PC-9 (cell line): ENCODE measurements at regions of chr22 and their contacts with region 1.

Region 1: DNA sequence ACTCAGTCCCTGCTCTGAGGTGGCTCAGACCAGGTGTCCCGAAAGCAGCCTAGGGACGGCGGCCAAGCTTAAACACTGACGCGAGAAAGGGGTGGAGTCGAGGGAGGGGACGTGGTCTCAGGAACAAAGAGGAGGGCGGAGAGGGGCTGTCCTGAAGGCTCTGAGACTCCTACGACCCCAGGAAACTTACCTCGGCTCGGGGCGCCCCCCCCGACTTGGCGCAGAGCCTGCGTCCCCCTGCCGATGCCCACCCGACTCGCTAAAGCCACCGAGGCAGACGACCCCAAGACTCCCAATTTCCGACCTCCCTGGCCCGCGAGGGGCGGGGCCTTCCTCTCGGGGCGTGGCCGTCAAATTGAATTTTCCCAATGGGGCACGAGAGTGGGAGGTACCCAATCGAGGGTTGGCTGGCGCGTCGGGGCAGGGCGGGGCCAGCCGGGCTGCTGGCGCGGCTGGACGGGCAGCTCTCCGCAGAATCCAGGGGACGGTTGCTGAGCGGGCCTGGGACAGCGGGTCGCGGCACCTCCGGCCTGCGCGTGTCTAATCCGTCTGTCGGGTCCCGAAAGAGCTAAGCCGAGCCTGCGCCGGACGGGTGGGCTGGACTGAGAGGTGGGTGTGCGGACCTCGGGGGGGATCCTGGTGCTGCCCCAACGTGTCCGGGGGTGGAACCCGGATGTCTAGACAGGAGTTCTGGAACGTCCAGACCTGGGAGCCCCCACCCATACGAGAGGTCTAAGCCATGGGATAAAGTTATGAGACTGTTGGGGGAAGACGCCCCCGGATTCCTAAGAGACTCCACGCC is at the start of gene SMTN:
- DNase-seq: peak; percentile 80 to 95
- H3K4me3 ChIP-seq: peak within 1 kb of the TSS; percentile 59
- H3K27ac ChIP-seq: no peak within 1 kb of the TSS
- H3K4me1 ChIP-seq: peaks cover 20% of the 10 kb centered on the region
- H3K27me3 ChIP-seq: no peaks in the 10 kb centered on the region
- CTCF ChIP-seq: no peak
- total RNA-seq, gene SMTN: 68.8 and 76.3 TPM in 2 replicates

Region 2: DNA sequence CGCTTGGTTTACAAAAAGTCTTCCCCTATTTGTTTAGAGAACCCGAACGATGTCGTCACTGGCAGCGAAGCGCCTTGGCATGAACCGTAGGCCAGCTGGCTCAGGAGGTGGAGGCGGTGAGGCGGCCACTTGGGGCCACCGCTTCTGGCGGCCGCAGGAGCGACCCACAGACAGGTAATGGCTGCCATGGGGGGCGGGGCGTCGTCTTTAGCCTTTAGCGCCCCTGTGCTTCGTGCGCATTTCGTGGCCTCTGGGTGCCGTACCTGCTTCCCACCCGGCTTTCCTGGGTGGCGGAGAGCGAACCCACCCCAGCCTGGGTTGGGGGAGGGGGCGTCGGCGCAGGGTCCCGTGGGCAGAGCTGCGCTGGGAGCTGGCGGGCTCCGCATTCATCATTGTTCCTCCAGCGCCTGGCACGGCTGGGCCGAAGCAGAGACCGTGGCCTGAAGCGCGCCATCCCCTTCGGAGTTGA is 386.8 kb before region 1 on chr22:
- CTCF ChIA-PET with region 1: no interaction called
- POLR2A ChIA-PET with region 1: interaction called, 11 read pairs
- intact Hi-C with region 1: no loop called
- DNase-seq: peak; percentile 59 to 70
- H3K4me3 ChIP-seq: peak overlapping the region; percentile 64
- H3K27ac ChIP-seq: no peak overlapping the region
- H3K4me1 ChIP-seq: peaks cover 9% of the 10 kb centered on the region; the same call in 1 of the 2 replicates
- H3K27me3 ChIP-seq: no peaks in the 10 kb centered on the region
- CTCF ChIP-seq: no peak

Region 3: GRCh38 chr22:30931541-30932300 is 149.3 kb before region 1 on chr22:
- CTCF ChIA-PET with region 1: interaction called, 10 read pairs
- POLR2A ChIA-PET with region 1: no interaction called
- intact Hi-C with region 1: no loop called
- DNase-seq: no peak
- H3K4me3 ChIP-seq: no peak overlapping the region
- H3K27ac ChIP-seq: no peak overlapping the region
- H3K4me1 ChIP-seq: no peaks in the 10 kb centered on the region
- H3K27me3 ChIP-seq: no peaks in the 10 kb centered on the region
- CTCF ChIP-seq: no peak

Region 4: GRCh38 chr22:30968924-30969539 is 112.0 kb before region 1 on chr22 and contains the start of gene TUG1:
- CTCF ChIA-PET with region 1: no interaction called
- POLR2A ChIA-PET with region 1: interaction called, 7 read pairs
- intact Hi-C with region 1: loop called (anchors 1 kb)
- DNase-seq: peak; percentile 95 to 97
- H3K4me3 ChIP-seq: peak within 1 kb of the TSS; percentile 89
- H3K27ac ChIP-seq: peak within 1 kb of the TSS; percentile 78
- H3K4me1 ChIP-seq: peaks cover 32% of the 10 kb centered on the region; the same call in 1 of the 2 replicates
- H3K27me3 ChIP-seq: no peaks in the 10 kb centered on the region
- CTCF ChIP-seq: no peak
- total RNA-seq, gene TUG1: 80.6 and 105 TPM in 2 replicates

Region 5: DNA sequence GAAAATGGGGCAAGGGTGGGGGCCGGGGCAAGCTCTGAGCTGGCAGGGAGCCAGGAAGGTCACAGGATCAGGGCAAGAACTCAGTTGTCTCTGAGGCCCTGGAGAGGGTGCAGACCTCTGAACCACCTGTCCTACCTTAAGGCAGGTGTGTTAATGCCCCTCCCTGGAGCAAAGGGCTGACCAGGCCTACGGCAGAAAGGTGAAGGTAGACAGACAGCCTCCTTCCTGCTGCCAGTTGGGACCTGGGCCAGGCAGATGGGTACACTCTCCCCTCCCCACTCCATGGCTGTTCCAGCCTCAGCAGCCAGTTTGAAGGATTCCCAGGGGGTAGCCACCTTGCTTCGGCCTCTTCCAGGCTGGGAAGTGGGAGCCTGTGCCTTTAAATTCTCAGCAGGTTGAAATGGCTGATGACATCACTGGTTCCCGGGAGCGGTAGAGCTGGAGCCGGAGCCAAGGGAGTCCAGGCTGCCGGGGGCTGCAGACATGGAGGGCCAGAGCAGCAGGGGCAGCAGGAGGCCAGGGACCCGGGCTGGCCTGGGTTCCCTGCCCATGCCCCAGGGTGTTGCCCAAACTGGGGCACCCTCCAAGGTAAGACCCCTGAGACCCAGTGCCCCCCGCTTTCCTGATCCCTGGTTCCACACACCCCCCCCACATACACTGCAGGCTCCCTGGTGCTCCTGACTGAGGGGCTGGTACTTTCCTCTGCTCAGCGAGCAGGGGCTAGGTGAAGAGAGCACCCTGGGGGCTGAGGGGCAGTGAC is 41.7 kb after region 1 on chr22 and contains the start of gene INPP5J:
- CTCF ChIA-PET with region 1: no interaction called
- POLR2A ChIA-PET with region 1: no interaction called
- intact Hi-C with region 1: no loop called
- DNase-seq: peak; percentile 34 to 48
- H3K4me3 ChIP-seq: peak within 1 kb of the TSS; percentile 57
- H3K27ac ChIP-seq: no peak within 1 kb of the TSS
- H3K4me1 ChIP-seq: peaks cover 6% of the 10 kb centered on the region; the same call in 1 of the 2 replicates
- H3K27me3 ChIP-seq: peaks cover 16% of the 10 kb centered on the region; the same call in 1 of the 2 replicates
- CTCF ChIP-seq: no peak
- total RNA-seq, gene INPP5J: 1.7 and 3.1 TPM in 2 replicates

Region 6: DNA sequence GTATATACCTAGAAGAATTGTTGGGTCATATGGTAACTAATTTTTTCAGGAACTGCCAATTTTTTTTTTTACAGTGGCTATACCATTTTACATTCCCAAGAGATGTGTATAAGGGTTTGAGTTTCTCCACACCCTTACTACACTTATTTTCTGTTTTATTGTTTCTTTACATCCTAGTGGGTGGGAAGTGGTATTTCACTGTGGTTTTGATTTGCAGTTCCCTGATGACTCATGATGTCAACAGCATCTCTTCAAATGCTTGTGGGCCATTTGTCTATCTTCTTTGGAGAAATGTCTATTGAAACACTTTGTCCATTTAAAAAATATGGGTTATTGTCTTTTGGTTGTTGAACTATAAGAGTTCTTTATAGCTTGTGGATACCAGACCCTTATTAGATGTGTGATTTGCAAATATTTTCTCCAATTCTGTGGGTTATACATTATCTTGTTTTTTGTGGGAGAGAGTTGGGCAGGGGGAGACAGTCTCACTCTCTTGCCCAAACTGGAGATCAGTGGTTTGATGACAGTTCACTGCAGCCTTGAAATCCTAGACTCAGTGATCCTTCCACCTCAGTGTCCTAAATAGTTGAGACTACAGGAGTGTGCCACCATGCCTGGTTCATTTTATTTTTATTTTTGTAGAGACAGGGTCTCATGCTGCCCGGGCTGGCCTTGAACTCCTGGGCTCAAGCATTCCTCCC is 611.3 kb after region 1 on chr22:
- CTCF ChIA-PET with region 1: no interaction called
- POLR2A ChIA-PET with region 1: interaction called, 18 read pairs
- intact Hi-C with region 1: no loop called
- DNase-seq: no peak
- H3K4me3 ChIP-seq: no peak overlapping the region
- H3K27ac ChIP-seq: no peak overlapping the region
- H3K4me1 ChIP-seq: no peaks in the 10 kb centered on the region
- H3K27me3 ChIP-seq: no peaks in the 10 kb centered on the region
- CTCF ChIP-seq: no peak